ENCODE measurements at regions of chr7 and their contacts with region 1.

Region 1: DNA sequence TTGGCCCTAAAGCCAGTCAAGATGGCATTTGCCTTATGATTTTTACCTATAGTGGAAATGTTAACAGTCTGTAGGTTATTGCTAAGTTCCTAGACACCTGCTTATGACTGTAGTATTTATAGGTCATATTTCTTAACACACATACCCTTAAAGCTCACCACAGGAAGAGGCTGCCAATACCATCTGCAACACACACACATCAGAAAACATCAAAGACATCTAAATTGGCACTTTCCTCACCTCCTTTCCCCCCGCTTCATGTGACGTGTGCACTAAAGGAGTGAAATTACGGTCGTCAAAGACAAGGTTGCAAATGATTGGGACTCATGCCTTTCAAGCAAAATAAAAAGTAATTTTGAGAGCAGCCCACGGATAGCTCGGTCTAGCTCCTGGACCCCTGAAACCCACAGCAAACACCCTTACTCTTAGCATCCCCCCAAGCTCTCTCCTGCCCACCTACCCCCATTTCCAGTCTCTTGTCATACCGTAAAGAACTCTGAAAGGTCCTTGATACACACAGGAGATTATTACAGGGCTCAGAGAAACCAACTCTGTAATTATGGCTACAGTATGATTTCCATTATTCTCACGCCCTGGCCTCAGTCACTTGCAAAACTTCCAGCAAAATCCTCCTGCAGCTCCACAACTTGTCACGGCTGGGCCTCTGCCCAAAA is 90.5 kb downstream of the PLXNA4 start:
- DNase-seq: peak; percentile 59
- H3K4me3 Mint-ChIP-seq: no peak overlapping the region
- H3K27ac Mint-ChIP-seq: peak overlapping the region; percentile 35
- H3K4me1 Mint-ChIP-seq: peaks cover 23% of the 10 kb centered on the region
- H3K27me3 Mint-ChIP-seq: no peaks in the 10 kb centered on the region

Region 2: GRCh38 chr7:132430861-132431822 is 54.6 kb before region 1 on chr7:
- CTCF ChIA-PET with region 1: no interaction called
- POLR2A ChIA-PET with region 1: no interaction called
- intact Hi-C with region 1: loop called (anchors 1 kb)
- DNase-seq: peak; percentile 73
- H3K4me3 Mint-ChIP-seq: no peak overlapping the region
- H3K27ac Mint-ChIP-seq: peak overlapping the region; percentile 74
- H3K4me1 Mint-ChIP-seq: peaks cover 61% of the 10 kb centered on the region
- H3K27me3 Mint-ChIP-seq: peaks cover 3% of the 10 kb centered on the region

Region 3: DNA sequence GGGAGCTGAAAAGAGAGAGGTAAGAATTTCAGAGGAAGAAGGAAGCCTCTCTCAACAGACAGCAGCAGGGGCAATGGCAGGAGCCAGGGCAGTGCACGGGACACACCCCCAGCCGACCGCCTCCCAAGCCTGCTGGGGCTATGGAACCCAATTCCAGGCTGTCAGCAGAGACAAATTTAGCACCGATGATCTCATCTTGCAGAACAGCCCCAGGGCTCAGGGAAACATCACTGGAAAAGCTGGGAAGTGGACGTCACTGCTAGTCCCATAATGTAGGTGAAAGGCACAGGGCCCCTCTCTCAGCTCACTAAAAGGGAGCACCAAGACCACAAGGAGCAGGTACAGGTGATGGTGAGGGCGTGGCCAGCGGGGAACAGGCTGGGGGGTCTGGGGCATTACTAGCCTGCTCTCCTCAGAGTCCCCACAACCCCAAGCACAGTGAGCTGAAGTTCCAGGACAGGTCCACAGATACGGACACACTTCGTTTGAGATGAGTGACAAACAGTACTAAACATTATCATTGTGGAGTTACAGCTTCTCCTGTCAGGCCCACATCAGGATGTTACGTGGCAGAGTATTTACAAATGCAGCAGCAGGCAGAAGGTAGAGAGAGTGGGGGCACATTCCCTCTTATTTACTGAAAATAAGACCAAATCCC is 13.1 kb before region 1 on chr7:
- CTCF ChIA-PET with region 1: no interaction called
- POLR2A ChIA-PET with region 1: no interaction called
- intact Hi-C with region 1: loop called (anchors 1 kb)
- DNase-seq: no peak
- H3K4me3 Mint-ChIP-seq: no peak overlapping the region
- H3K27ac Mint-ChIP-seq: no peak overlapping the region
- H3K4me1 Mint-ChIP-seq: peaks cover 11% of the 10 kb centered on the region
- H3K27me3 Mint-ChIP-seq: peaks cover 2% of the 10 kb centered on the region

Region 4: DNA sequence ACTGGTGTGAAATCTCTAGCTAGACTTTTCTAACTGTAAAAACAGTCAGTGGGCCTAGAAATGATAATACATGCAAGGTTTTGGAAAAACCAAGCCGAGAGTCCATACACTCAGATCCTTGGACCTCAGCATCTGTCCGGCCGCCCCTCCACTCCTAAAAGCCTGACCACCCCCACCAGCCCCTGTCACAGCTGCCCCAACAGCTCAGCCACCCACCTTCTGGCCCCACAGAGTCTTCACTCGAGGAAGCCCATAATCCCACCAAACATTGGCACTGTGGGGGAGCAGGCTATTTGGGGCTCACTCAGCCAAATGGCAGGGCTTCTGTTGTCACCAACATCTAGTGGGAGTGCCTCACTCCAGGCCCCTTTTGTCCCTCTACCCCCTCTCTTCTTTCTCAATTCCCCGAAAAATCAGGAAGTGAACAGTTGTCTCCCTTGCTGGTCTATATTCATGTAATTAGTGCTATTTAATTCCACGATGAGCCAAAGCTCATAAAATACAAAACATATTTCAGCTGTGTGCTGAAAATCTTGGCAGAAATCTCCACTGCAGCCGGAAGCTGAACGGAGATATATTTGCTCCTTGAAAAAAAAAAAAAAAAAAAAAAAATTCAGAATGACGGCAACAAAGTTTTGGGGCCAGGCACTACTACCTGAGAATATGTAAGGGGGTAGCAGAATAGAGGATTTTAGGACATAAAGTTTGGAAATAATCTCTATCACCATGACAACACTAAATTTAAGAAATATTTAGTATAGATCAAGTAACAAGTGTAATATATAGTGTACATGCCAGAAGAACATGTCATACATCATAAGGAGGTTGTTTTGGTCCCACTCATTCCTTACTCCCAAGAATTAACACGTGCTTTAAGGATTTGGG is 35.1 kb after region 1 on chr7:
- CTCF ChIA-PET with region 1: no interaction called
- POLR2A ChIA-PET with region 1: no interaction called
- intact Hi-C with region 1: no loop called
- DNase-seq: no peak
- H3K4me3 Mint-ChIP-seq: no peak overlapping the region
- H3K27ac Mint-ChIP-seq: no peak overlapping the region
- H3K4me1 Mint-ChIP-seq: peaks cover 6% of the 10 kb centered on the region
- H3K27me3 Mint-ChIP-seq: peaks cover 4% of the 10 kb centered on the region

Measured in activated CD4-positive, alpha-beta memory T cell treated with anti-CD3 and anti-CD28 coated beads for 36 hours (primary cell).